ENCODE measurements at regions of chr12 and their contacts with region 1.

Region 1: GRCh38 chr12:57846577-57847319 is at the start of gene CTDSP2:
- DNase-seq: peak; percentile 100
- H3K4me3 ChIP-seq: peak within 1 kb of the TSS; percentile 66 to 98 (median 84)
- H3K27ac ChIP-seq: peak within 1 kb of the TSS; percentile 98 to 99 (median 98)
- H3K4me1 ChIP-seq: peaks cover 17 to 37% (median 31%) of the 10 kb centered on the region in 4 donors
- H3K27me3 ChIP-seq: no peaks in the 10 kb centered on the region
- CTCF ChIP-seq: peak in 1 of 5 experiments; percentile 26
- EP300 ChIP-seq: no peak
- POLR2A ChIP-seq: peak; percentile 82
- total RNA-seq, gene CTDSP2: 174 to 268 (median 231) TPM

Region 2: DNA sequence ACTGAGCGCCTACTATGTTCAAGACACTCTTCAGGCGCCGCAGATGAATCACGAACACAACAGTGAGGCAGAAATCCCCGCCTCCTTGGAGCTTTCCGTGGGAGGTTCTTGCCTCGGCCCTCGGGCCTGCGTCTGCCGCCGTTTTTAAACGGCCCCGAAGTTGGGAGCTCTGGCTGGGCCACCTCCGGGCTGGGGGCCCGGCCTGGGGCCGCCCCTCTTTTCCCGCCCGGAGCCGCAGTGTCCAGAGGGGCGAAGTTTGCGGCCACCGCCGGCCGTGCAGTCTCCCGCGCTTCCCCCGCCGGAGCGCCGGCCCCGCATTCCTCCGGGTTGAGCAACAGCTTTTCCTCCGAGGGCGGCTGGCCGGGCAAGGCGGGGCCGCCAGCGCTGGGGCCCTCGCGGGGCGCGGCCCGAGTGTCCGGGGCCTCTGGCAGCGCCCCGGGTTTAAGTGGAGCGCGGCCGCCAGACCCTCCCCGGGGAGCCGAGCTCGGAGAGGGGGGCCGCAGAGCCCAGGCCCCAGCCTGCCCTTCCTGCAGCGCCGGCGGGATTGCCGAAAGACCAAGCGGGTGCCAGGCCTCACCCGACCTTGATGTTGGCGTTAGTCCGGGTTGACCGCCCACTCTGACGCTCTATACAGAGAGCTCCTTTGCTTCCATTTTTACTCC is 18.5 kb after region 1 on chr12:
- in situ Hi-C with region 1: no loop called
- intact Hi-C with region 1: loop called (anchors 2 kb)
- DNase-seq: peak; percentile 82
- H3K4me3 ChIP-seq: peak overlapping the region; percentile 51 to 70 (median 62)
- H3K27ac ChIP-seq: peak overlapping the region; percentile 90 to 98 (median 96)
- H3K4me1 ChIP-seq: peaks cover 9 to 40% (median 19%) of the 10 kb centered on the region in 4 donors
- H3K27me3 ChIP-seq: no peaks in the 10 kb centered on the region
- CTCF ChIP-seq: no peak
- EP300 ChIP-seq: no peak
- POLR2A ChIP-seq: peak; percentile 69

Region 3: GRCh38 chr12:57893431-57894353 is 46.9 kb after region 1 on chr12:
- in situ Hi-C with region 1: loop called in 2 of 4 experiments (anchors 5 to 10 kb)
- intact Hi-C with region 1: loop called (anchors 5 kb)
- DNase-seq: peak; percentile 90
- H3K4me3 ChIP-seq: no peak overlapping the region
- H3K27ac ChIP-seq: peak overlapping the region; percentile 94 to 99 (median 96)
- H3K4me1 ChIP-seq: peaks cover 88 to 97% (median 94%) of the 10 kb centered on the region in 4 donors
- H3K27me3 ChIP-seq: no peaks in the 10 kb centered on the region
- CTCF ChIP-seq: peak in 2 of 5 experiments; percentile 12 to 48
- EP300 ChIP-seq: no peak
- POLR2A ChIP-seq: no peak

Region 4: GRCh38 chr12:57899010-57899662 is 52.4 kb after region 1 on chr12:
- in situ Hi-C with region 1: loop called in 2 of 4 experiments (anchors 5 to 10 kb)
- intact Hi-C with region 1: loop called (anchors 5 kb)
- DNase-seq: peak; percentile 73
- H3K4me3 ChIP-seq: no peak overlapping the region
- H3K27ac ChIP-seq: peak overlapping the region; percentile 94 to 99 (median 96)
- H3K4me1 ChIP-seq: peaks cover 47 to 50% (median 49%) of the 10 kb centered on the region in 4 donors
- H3K27me3 ChIP-seq: no peaks in the 10 kb centered on the region
- CTCF ChIP-seq: no peak
- EP300 ChIP-seq: no peak
- POLR2A ChIP-seq: no peak

Region 5: GRCh38 chr12:57983146-57983857 is 136.6 kb after region 1 on chr12:
- in situ Hi-C with region 1: no loop called
- intact Hi-C with region 1: no loop called
- DNase-seq: peak; percentile 30
- H3K4me3 ChIP-seq: no peak overlapping the region
- H3K27ac ChIP-seq: no peak overlapping the region
- H3K4me1 ChIP-seq: no peaks in the 10 kb centered on the region
- H3K27me3 ChIP-seq: no peaks in the 10 kb centered on the region
- CTCF ChIP-seq: peak; percentile 48 to 65 (median 56)
- EP300 ChIP-seq: no peak
- POLR2A ChIP-seq: no peak

Region 6: GRCh38 chr12:58009405-58010195 is 162.9 kb after region 1 on chr12:
- in situ Hi-C with region 1: no loop called
- intact Hi-C with region 1: no loop called
- DNase-seq: no peak
- H3K4me3 ChIP-seq: no peak overlapping the region
- H3K27ac ChIP-seq: no peak overlapping the region
- H3K4me1 ChIP-seq: no peaks in the 10 kb centered on the region
- H3K27me3 ChIP-seq: no peaks in the 10 kb centered on the region
- CTCF ChIP-seq: no peak
- EP300 ChIP-seq: no peak
- POLR2A ChIP-seq: no peak